HEK293T (cell line): ENCODE measurements at regions of chr10 and their contacts with region 1.

Region 1: DNA sequence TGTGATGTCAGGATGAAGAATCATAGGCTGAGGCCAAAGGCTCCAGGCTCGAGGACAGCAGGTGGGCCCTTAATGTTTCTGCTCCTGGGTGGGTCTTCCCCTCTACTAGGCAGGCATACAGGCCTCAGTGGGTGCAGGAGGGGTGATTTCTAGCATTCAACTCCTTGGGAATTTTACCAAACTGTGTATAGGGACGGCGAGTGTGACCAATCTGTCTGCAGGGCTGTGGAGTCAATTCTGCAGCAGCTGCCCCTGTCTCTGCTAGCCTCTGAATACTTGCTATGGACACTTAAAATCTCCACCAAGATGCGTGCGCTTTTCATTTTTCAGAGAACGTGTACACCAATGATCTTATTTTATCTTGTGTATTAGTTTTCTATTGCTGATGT is 115.5 kb downstream of the WDR11 start:
- DNase-seq: no peak

Region 2: GRCh38 chr10:120948889-120949608 is 17.6 kb before region 1 on chr10:
- CTCF ChIA-PET with region 1: interaction called, 10 read pairs
- POLR2A ChIA-PET with region 1: interaction called, 4 read pairs
- DNase-seq: peak; percentile 92

Region 3: GRCh38 chr10:120979435-120980278 is 13.0 kb after region 1 on chr10:
- CTCF ChIA-PET with region 1: no interaction called
- POLR2A ChIA-PET with region 1: interaction called, 27 read pairs
- DNase-seq: peak; percentile 82

Region 4: DNA sequence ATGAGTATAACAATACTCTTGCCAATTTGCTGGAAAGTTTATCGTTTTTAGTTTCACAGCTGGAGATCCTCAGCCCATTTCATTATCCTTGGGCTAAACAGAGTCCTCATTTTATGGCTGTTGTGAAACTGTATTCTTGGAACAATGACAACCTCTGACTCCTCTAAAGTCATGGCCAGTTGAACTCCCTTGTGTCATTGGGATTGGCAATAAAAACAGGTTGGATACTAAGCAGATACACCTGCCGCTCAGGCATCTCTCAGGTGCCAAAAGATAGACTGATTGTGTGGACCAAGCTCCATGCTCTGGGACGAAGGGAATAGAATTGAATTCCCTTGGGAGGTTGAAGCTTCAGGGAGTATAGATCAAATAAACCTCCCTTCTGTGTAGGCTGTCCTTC is 66.7 kb after region 1 on chr10:
- CTCF ChIA-PET with region 1: no interaction called
- POLR2A ChIA-PET with region 1: no interaction called
- DNase-seq: no peak